Adrenal gland (tissue), 19 donors: ENCODE measurements at regions of chr17 and their contacts with region 1.

Region 1: DNA sequence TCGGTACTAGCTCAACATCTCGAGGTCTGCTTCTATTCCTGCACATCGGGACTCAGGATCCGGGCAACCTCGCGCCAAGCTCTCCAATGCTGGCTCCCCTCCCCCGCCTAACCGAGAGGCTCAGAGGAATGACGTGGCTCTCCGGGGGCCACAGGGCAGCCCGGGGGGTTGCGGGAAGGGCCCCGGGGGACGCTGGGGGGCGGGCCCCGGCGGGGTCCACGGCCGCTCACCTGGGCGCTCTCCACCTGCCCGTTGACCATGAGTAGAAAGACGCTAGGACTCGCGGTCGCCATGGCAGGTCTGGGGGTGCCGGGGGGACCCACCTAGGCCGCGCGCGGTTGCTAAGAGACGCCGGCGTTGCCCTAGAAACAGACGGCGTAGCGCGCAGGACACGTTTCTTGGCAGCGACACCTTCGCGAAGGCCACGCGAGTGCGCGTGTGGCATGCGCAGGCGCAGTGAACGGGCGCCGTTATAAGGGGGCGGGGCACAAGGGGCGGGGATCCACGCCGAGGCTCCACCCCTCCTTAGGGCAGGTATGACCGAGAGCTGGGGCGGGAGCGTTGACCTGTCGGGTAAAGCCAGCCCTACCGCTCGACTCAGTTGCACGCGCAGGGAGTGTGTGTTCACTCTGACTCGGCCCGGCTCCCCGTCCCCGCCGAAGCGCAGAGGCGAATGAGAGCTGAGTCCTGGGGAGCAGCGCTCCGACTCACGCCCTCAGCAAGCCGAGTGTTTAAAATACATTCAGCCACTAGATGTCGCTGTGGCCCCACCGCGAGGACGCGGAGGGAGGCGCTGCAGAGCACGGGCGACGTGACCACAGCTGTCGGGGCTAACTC is at the start of gene B9D1:
- DNase-seq: peak; percentile 93 to 98 (median 95)
- H3K4me3 ChIP-seq: peak within 1 kb of the TSS in 2 of 4 donors; percentile 53 to 88
- H3K27ac ChIP-seq: peak within 1 kb of the TSS; percentile 77 to 96 (median 91)
- H3K4me1 ChIP-seq: peaks cover 12 to 14% of the 10 kb centered on the region in 2 donors
- H3K27me3 ChIP-seq: no peaks in the 10 kb centered on the region
- CTCF ChIP-seq: peak; percentile 97 to 100 (median 100)
- POLR2A ChIP-seq: peak; percentile 44 to 48
- total RNA-seq, gene B9D1: 19.3 to 67.7 (median 29.1) TPM

Region 2: DNA sequence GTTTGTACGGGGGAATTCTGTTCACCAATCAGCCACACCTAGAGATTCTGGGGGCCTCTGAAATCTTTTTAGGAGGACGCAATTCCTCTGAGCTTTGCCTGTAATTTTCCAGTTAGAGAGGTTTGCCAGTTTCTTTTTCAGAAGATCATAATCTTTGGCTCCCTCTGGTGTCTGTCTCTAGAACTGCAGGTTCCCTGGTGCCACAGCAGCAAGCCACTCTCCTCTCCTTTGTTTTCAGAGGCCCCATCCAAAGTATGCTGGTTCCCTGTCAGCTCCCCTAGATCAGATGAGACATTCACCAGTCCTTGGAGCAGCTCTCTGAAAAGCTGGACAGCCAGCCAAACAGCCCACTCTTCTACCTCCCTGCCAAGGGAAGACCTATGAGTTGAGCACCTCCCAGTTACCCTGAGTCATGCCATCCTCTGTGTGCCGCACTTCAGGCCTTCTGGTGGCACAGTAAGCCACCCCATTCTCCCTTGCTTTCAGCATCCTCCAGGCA is 84.6 kb after region 1 on chr17:
- intact Hi-C with region 1: loop called (anchors 2 to 5 kb)
- DNase-seq: peak; percentile 79 to 93 (median 88)
- H3K4me3 ChIP-seq: peak overlapping the region in 1 of 4 donors; percentile 27
- H3K27ac ChIP-seq: peak overlapping the region; percentile 50 to 94 (median 89)
- H3K4me1 ChIP-seq: peaks cover 30 to 36% of the 10 kb centered on the region in 2 donors
- H3K27me3 ChIP-seq: no peaks in the 10 kb centered on the region
- CTCF ChIP-seq: peak; percentile 90 to 98 (median 97)
- POLR2A ChIP-seq: no peak

Region 3: DNA sequence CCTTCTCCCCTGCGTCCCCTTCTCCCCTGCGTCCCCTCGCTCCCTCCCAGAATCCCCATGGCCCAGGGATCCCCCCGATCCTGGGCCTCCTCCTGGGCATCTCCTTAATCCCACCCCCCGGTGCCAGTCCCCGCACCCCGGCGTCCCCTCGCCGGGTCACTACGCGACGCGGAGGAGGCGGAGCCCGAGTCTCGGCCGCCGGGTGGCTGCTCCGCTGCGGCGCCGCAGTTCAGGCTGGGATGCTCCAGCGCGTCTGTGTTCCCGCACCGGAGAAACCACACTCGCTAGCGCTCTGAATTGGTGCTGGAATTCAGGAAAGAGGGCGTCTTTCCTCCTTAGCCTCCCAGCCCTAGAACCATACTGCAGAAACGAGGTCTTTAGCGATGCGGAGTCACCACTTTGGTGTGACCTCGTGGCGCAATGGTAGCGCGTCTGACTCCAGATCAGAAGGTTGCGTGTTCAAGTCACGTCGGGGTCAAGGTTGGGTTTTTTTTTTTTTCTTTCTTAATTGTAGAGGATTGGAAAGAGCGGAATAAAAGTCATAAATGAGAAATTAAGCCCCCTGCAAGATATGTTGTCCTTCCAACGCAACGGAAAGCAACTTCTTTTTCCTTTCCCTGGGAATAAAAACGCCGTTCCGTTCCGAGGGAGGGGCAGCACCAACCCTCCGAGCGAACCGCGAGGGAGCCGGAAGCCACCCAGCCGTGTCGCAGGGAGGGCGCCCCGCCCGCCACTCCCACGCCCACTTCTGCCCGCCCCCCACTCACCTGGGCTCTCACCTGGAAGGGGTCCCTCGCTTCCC is 145.5 kb after region 1 on chr17:
- intact Hi-C with region 1: loop called in 1 of 2 experiments (anchors 10 kb)
- DNase-seq: peak; percentile 84 to 96 (median 88)
- H3K4me3 ChIP-seq: peak overlapping the region; percentile 9 to 78 (median 61)
- H3K27ac ChIP-seq: peak overlapping the region; percentile 85 to 93 (median 90)
- H3K4me1 ChIP-seq: no peaks in the 10 kb centered on the region
- H3K27me3 ChIP-seq: no peaks in the 10 kb centered on the region
- CTCF ChIP-seq: peak in 1 of 6 experiments; percentile 2
- POLR2A ChIP-seq: peak; percentile 18 to 77

Region 4: DNA sequence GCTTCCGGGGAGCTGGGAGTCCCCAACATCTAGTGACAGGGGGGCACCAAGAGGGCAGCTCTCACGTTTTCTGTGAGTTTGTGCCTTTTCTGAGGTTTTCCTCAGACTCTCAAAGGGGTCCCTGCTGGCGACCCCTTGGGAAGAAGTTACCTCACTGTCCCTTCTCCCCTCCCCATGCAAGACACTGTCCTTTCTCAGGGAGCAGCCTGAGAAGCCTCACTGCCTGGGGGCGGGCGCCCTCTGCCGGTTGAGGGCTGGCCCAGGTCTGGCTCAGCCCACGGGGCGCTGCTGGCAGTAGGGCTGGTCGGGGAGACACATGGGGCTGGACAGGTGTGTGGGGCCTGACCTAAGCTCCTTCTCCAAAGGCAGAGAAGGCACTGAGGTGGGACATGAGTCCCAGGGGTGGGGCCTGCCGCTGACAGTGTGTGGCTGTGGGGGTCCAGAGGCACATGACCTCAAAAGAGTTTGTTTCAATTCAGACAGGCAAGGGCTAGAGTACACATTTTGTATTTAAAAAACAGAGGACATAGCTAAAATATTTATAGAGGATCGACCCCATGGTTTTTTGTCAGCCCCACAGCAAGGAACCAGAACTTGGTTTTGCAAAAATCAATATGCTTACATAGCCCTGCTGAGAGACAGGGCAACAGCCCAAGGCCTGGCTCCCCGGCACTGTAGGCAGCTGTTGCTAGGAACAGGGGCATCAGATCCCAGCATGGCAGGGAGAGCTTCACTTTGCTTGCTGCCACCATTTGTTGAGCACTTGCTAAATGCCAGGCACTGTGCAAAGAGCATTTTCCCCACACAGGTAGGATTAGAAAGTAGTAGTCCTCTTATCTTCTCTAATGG is 404.2 kb after region 1 on chr17:
- intact Hi-C with region 1: loop called (anchors 10 kb)
- DNase-seq: peak; percentile 68 to 87 (median 83)
- H3K4me3 ChIP-seq: no peak overlapping the region
- H3K27ac ChIP-seq: no peak overlapping the region
- H3K4me1 ChIP-seq: peaks cover 0 to 5% of the 10 kb centered on the region in 2 donors
- H3K27me3 ChIP-seq: no peaks in the 10 kb centered on the region
- CTCF ChIP-seq: peak; percentile 89 to 97 (median 94)
- POLR2A ChIP-seq: no peak